ENCODE measurements at regions of chr17 and their contacts with region 1.

Region 1: DNA sequence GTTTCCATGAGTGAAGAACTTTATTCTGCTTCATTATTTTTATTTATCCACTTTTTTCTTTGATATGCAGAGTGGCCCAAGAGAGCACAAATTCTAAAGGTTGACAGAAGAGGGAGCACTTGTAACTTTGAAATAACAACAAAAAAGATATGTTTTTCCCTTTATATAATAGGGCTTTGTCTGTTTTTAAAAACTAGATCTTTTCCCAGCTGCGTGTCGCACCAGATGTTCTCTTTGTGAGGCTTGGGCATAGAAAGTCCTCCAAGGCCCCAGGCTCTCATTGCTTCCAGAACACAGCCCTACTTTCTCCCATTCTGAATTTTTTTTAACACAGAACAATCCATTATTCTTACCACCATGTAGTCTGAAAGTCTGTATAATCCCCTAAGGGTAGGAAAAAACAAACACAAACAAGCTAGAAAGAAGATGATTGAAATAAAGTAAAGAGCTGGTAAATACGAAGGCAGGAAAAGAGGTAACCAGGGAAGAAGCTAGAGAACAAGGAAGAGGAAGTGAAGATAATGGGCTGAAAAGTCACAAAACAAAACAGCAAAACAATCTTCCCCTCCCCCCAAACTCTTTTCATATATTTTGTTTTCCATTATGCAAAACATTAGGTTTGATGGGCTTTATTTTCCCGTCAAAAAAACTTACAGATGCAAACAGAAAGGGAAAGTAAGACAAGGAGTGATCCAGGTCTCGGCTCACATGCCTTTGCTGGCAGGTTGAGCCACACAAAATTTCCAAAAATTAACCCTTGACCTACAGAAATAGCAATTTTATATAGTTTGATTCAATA is 160.4 kb downstream of the ABCA8 start:
- DNase-seq: peak; percentile 82
- H3K4me3 ChIP-seq: no peak overlapping the region
- H3K27ac ChIP-seq: peak overlapping the region; percentile 89
- H3K4me1 ChIP-seq: peaks cover 26% of the 10 kb centered on the region
- H3K27me3 ChIP-seq: no peaks in the 10 kb centered on the region
- CTCF ChIP-seq: peak; percentile 18 to 31
- POLR2A ChIP-seq: no peak

Region 2: DNA sequence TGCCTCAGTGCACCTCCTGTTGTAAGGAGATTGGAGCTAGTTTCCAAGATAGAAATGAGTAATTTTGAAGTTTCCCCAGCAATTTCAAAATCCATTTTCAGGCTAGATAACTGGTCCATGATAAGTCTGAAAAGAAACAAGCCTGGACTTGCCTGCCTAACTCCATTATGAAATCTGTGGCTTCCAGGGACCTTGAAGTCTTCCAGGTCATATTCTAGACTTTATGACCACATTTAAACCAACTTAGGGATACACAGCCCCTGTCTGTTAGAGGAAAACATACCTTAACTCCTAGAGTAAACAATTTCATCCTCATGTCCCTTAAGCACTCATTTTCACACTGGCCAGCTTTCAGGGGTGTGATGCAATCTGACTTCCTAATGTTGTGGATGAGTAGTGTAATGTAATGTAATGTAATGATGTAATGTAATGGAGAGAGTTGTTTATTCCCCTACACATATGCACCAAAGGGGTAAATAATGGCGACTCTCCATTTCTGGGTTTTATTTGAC is 96.9 kb before region 1 on chr17:
- CTCF ChIA-PET with region 1: no interaction called
- POLR2A ChIA-PET with region 1: no interaction called
- dilution Hi-C with region 1: no loop called
- intact Hi-C with region 1: no loop called
- DNase-seq: no peak
- H3K4me3 ChIP-seq: no peak overlapping the region
- H3K27ac ChIP-seq: no peak overlapping the region
- H3K4me1 ChIP-seq: no peaks in the 10 kb centered on the region
- H3K27me3 ChIP-seq: no peaks in the 10 kb centered on the region
- CTCF ChIP-seq: no peak
- POLR2A ChIP-seq: no peak

Region 3: DNA sequence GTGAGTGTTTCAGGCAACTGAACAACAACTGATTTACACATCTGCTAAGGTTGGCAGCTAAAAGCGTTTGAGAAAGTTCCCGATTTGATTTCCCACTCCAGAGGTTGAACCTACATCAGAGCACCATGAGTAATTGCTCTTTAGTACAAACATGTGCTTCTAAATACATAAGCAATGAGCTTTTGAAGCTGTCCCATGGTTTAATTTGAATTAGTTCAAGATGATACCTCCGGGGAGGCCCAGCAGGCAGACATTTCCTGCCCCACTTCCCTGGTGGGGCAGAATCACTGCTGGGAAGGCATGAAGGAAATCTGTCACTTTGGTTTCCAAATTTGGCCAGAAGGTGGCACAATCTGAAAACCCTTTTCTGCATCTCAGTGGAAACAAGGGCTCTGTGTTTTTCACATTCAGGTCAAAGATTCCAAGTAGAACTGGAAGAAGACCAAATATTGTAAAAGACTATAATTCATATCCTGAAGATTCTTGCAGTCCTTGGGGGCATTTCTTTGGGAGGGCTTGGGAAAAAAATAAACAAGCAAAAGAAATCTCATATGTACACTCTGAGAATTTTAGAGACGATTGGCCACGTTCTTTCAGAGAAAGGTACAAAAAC is 17.5 kb before region 1 on chr17:
- CTCF ChIA-PET with region 1: interaction called, 40 read pairs
- POLR2A ChIA-PET with region 1: no interaction called
- dilution Hi-C with region 1: no loop called
- intact Hi-C with region 1: loop called (anchors 1 kb)
- DNase-seq: peak; percentile 90
- H3K4me3 ChIP-seq: no peak overlapping the region
- H3K27ac ChIP-seq: peak overlapping the region; percentile 44
- H3K4me1 ChIP-seq: peaks cover 36% of the 10 kb centered on the region
- H3K27me3 ChIP-seq: no peaks in the 10 kb centered on the region
- CTCF ChIP-seq: peak; percentile 63
- POLR2A ChIP-seq: no peak

Region 4: DNA sequence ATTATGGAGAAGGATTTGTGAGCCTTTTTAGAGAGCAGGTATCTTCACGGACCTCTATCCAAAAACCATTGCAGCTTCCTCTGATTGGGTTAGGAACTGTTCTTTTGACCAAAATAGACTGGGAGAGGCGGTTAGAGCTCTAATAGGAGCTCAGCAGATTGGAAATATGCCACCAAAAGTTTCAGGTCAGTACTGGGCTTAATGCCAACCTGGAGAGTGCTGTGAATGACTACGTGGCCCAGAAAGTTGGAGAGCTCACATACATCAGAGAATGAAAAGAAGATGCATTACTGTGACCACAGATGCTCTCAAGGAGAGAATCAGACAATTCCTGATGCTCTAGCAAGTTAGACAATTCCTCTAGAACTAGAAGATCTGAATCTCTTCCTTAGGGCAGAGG is 73.9 kb after region 1 on chr17:
- CTCF ChIA-PET with region 1: interaction called, 3 read pairs
- POLR2A ChIA-PET with region 1: no interaction called
- dilution Hi-C with region 1: no loop called
- intact Hi-C with region 1: loop called (anchors 10 kb)
- DNase-seq: peak; percentile 50
- H3K4me3 ChIP-seq: no peak overlapping the region
- H3K27ac ChIP-seq: no peak overlapping the region
- H3K4me1 ChIP-seq: no peaks in the 10 kb centered on the region
- H3K27me3 ChIP-seq: no peaks in the 10 kb centered on the region
- CTCF ChIP-seq: no peak
- POLR2A ChIP-seq: no peak

Region 5: DNA sequence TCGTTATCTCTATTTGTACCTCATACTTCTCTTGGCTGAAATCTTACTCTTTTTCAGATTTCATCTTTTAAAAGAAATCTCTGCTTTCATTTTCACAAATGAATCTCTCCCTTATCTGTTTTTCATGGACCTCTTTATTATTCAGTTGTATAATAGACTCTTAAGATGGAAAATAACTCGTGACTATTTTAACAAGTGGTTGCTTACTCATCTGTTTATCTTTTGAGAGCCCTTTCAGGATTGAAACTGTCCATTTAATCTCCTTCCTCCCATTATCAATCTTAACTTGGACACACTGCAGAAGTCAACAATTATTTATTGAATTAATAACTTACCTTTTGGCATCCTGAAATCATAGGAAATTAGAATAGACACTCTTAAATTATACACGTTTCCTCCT is 91.6 kb after region 1 on chr17:
- CTCF ChIA-PET with region 1: no interaction called
- POLR2A ChIA-PET with region 1: no interaction called
- dilution Hi-C with region 1: no loop called
- intact Hi-C with region 1: no loop called
- DNase-seq: no peak
- H3K4me3 ChIP-seq: no peak overlapping the region
- H3K27ac ChIP-seq: no peak overlapping the region
- H3K4me1 ChIP-seq: peaks cover 3% of the 10 kb centered on the region
- H3K27me3 ChIP-seq: no peaks in the 10 kb centered on the region
- CTCF ChIP-seq: no peak
- POLR2A ChIP-seq: no peak

Region 6: GRCh38 chr17:68972119-68972704 is 177.4 kb after region 1 on chr17:
- CTCF ChIA-PET with region 1: interaction called, 24 read pairs
- POLR2A ChIA-PET with region 1: no interaction called
- dilution Hi-C with region 1: no loop called
- intact Hi-C with region 1: loop called (anchors 1 kb)
- DNase-seq: peak; percentile 64
- H3K4me3 ChIP-seq: no peak overlapping the region
- H3K27ac ChIP-seq: no peak overlapping the region
- H3K4me1 ChIP-seq: no peaks in the 10 kb centered on the region
- H3K27me3 ChIP-seq: no peaks in the 10 kb centered on the region
- CTCF ChIP-seq: peak; percentile 50 to 58
- POLR2A ChIP-seq: no peak